Activated T-helper 1 cell treated with anti-CD3 and anti-CD28 coated beads, Interleukin-12 subunit alpha, Interleukin-12 subunit beta, Interleukin-2, Interleukin-4 antibody, amounts not matched to agents 30 ng/mL and 10 ng/mL and 1 ng/mL, durations not matched to agents 14 hours and 24 hours and 36 hours (primary cell): ENCODE measurements at regions of chr14 and their contacts with region 1.

Region 1: DNA sequence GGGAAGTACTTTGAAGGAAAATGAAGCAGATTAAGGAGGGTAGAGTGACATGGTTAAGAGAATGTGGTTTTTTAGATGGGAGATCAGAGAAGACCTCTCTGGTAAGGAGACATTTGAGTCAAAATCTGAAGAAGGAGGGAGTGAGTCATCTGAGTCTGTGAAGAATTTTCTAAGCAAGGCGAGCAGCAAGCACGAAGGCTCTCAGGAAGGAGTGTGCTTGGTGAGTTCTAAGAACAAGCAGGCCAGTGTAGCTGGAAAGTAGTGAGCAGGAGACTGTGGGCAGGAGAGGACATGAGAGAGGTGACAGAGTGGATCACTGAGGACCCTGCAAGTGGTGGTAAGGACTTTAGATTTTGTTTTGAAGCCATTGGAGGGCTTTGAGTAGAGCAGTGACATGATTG is 76.3 kb upstream of the FUT8 start:
- DNase-seq: peak; percentile 63
- H3K4me3 Mint-ChIP-seq: peak overlapping the region; percentile 91
- H3K27ac Mint-ChIP-seq: peak overlapping the region; percentile 96
- H3K4me1 Mint-ChIP-seq: peaks cover 59% of the 10 kb centered on the region
- H3K27me3 Mint-ChIP-seq: no peaks in the 10 kb centered on the region

Region 2: DNA sequence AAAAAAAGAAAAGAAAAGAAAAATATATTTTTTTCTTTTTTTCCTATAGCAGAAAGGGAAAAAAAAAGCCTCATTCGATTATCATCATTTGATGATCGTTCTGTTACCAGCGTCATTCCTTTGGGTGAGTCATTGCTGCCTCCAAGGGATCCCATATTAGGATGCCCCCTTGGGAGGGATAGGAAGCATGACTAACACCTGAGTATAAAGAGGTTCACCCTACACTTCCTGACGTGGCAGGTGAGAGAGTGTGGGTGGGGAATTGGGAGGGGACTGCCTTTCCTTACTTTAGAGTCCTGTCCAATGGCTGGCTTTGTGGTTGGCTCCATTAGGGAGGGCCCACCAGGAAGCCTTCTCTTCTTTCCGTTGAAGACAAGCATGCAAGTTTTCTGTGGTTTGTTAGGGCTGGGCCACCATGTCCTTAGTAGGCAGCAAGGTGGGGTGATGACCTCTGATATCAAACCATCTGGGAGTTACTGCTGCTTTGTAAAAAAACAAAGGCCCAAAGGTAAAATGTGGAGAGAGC is 20.2 kb after region 1 on chr14:
- intact Hi-C with region 1: loop called (anchors 1 kb)
- DNase-seq: no peak
- H3K4me3 Mint-ChIP-seq: peak overlapping the region; percentile 12
- H3K27ac Mint-ChIP-seq: peak overlapping the region; percentile 87
- H3K4me1 Mint-ChIP-seq: peaks cover 87% of the 10 kb centered on the region
- H3K27me3 Mint-ChIP-seq: no peaks in the 10 kb centered on the region